Sciatic nerve (tissue), 2 donors: ENCODE measurements at regions of chr20 and their contacts with region 1.

Region 1: DNA sequence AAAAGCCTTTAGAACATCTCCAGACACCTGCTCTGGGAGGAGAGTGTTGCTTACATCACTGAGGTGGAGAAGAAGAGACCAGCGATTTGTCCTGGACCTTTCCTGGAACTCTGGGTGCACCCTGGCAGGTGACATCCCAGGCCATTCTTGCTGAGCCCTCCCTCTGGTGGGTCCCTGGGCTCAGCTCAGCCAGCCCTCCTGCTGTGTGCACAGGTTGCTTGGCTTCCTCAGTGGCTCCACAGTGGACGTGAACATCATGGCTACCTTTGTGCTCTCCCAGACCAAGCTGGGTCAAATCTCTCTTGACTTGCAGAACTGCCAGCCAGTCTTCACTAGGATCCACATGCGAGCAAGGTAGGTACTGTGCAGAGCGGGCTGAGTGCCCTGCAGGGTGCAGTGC is 19.9 kb upstream of the BPIFA2 start:
- DNase-seq: no peak
- ATAC-seq: no peak

Region 2: DNA sequence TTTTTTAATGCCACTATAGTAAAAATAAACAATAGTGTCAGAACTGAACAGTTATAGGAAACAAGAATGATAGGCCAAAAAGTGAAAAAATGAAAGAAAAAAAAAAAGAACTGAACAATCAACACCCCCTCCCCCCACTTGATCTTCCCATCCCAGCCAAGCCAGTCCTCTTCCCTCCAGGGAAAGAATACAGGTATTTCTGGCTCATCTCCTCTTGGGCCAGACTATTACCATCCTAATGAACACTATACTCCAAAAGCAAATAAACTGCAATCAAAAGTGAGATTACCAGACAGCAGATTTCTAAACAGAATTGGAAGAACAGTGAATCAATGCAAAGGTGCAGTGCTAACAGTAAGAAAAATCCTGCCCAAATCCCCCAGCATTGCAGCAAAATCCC is 452.9 kb before region 1 on chr20:
- intact Hi-C with region 1: no loop called
- DNase-seq: no peak
- ATAC-seq: no peak

Region 3: GRCh38 chr20:34249291-34249690 is 1101.3 kb after region 1 on chr20:
- intact Hi-C with region 1: loop called (anchors 10 kb)
- DNase-seq: no peak
- ATAC-seq: peak; percentile 62